Right ventricle myocardium superior (tissue), 1 donor: ENCODE measurements at regions of chr21 and their contacts with region 1.

Region 1: DNA sequence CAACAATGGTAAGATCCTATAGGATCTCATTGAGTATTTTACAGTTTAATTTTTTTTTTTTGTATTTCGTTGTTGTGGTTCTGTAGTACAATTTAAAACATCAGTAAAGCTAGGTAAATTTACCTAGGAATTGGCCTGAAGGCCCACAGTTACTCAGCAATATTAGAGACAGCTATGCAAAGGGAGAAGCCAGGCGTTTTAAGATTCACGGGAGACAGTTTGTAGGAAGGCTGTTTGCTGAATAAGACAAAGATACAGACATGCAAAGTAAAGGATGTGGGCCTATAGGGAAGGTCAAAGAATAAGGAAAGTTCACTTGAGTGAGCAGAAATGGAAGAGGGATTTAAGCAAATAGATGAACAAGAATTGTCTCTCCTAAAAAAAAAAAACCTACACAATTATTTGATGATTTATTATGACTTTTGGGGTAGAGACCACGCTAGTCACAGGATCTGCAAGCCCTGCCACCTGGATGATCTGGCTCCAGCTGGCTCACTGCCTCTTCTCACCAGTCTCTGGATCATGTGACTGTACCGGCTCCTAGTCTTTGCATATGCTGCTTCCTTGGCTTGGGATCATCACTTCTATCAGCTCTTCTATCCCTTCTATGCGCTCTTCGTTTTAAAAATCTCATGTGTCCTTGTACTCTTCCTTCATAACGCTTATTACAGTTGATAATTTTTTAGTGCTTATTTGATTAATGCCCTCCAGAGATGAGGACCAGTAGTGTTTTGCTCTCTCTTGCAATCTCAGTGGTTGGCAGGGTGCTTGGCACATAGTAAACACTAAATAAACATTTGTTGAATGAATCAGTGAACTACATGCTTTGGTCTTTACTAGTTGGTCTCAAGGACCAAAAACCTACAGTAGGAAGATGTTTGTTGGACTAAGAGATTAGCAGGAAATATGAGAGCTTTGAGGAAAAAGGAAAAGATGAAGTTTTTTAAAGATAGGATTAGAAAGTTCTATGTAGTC is 14.1 kb downstream of the DYRK1A start:
- DNase-seq: no peak
- ATAC-seq: peak; percentile 60

Region 2: GRCh38 chr21:36966066-36966820 is 414.4 kb before region 1 on chr21 and contains the start of gene HLCS:
- intact Hi-C with region 1: no loop called
- DNase-seq: peak; percentile 81
- ATAC-seq: peak; percentile 89
- total RNA-seq, gene HLCS: 6.3 TPM

Region 3: GRCh38 chr21:37435120-37435519 is 54.5 kb after region 1 on chr21:
- intact Hi-C with region 1: loop called (anchors 10 kb)
- DNase-seq: peak; percentile 48
- ATAC-seq: peak; percentile 95